AG04449 (cell line): ENCODE measurements at regions of chr2 and their contacts with region 1.

Region 1: DNA sequence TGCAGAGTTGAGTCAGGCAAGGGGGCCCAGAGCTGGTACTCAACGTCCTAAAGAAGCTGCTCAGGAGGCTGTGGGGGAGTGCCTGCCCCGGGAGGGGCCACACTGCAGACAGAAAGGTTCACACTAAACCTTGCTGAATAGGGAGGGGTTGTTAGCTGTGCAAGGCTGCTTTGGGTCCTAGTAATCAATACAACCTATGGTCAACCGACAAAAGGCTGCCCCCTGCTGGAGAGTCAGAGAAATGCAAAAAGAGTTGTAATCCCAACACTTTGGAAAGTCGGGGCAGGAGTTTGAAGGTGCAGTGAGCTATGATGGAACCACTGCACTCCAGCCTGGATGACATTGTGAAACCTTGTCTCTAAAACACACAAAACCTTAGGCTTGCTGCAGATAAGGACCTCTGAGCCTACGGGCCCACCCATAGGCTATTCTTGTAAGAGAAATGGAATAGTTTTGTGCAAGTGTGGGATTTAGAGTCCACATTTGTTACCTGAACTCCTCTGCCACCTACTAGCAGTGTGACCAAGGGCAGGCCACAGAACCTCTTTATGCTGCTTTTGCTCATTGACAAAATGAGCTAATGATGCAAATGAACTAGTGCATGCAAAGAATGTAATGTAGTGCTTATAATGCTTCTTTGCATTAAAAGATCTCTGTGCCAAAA is 81.5 kb downstream of the PRPF40A start:
- DNase-seq: no peak
- H3K4me3 ChIP-seq: no peak overlapping the region
- CTCF ChIP-seq: peak; percentile 61

Region 2: GRCh38 chr2:152036611-152037469 is 598.9 kb before region 1 on chr2:
- CTCF ChIA-PET with region 1: interaction called, 29 read pairs
- POLR2A ChIA-PET with region 1: no interaction called
- DNase-seq: peak; percentile 16
- H3K4me3 ChIP-seq: no peak overlapping the region
- CTCF ChIP-seq: peak; percentile 77

Region 3: GRCh38 chr2:152183401-152184073 is 452.2 kb before region 1 on chr2:
- CTCF ChIA-PET with region 1: interaction called, 169 read pairs
- POLR2A ChIA-PET with region 1: no interaction called
- DNase-seq: no peak
- H3K4me3 ChIP-seq: no peak overlapping the region
- CTCF ChIP-seq: no peak

Region 4: GRCh38 chr2:152200562-152201465 is 435.0 kb before region 1 on chr2:
- CTCF ChIA-PET with region 1: interaction called, 29 read pairs
- POLR2A ChIA-PET with region 1: no interaction called
- DNase-seq: peak; percentile 83
- H3K4me3 ChIP-seq: peak overlapping the region; percentile 53
- CTCF ChIP-seq: no peak

Region 5: DNA sequence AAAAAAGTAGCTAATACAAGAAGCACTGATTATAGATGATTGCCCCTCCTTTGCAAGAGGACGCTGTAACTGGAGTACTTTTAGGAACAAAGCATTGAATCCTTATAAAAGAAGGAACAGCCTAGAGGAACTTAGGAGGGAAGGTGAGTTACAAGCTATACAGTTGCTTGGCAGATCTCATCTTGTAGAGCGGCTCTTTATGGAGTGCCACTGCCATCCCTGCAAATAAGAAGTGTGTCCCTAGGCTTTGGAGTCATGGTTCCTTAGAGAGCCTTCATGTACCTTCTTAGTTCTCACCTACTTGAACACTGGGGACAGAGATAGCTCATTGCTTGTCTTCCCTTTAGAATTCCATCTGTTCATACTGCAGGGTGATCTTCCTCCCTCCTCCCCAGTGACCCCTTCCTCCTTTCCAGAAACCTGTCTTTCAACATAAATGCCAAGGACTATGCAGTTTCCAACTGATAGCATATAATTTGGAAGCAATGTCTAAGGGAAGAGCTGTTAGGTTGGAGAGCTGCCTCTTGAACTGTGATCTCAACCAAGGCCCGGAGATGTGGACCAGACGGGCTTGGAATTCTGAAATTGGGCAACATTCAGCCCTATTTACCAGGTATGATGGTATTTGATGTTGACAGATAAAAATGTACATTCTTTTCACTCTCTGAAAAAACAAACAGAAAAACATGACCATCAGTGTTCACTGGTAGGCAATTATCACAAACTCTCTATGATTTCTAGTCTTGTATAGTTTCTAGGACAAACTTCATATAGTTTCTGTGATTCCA is 293.3 kb before region 1 on chr2:
- CTCF ChIA-PET with region 1: interaction called, 21 read pairs
- POLR2A ChIA-PET with region 1: no interaction called
- DNase-seq: no peak
- H3K4me3 ChIP-seq: no peak overlapping the region
- CTCF ChIP-seq: no peak

Region 6: GRCh38 chr2:152558158-152558984 is 77.4 kb before region 1 on chr2:
- CTCF ChIA-PET with region 1: interaction called, 19 read pairs
- POLR2A ChIA-PET with region 1: no interaction called
- DNase-seq: peak; percentile 70
- H3K4me3 ChIP-seq: no peak overlapping the region
- CTCF ChIP-seq: no peak

Region 7: GRCh38 chr2:152648336-152648735 is 12.6 kb after region 1 on chr2:
- CTCF ChIA-PET with region 1: interaction called, 79 read pairs
- POLR2A ChIA-PET with region 1: no interaction called
- DNase-seq: no peak
- H3K4me3 ChIP-seq: no peak overlapping the region
- CTCF ChIP-seq: no peak

Region 8: DNA sequence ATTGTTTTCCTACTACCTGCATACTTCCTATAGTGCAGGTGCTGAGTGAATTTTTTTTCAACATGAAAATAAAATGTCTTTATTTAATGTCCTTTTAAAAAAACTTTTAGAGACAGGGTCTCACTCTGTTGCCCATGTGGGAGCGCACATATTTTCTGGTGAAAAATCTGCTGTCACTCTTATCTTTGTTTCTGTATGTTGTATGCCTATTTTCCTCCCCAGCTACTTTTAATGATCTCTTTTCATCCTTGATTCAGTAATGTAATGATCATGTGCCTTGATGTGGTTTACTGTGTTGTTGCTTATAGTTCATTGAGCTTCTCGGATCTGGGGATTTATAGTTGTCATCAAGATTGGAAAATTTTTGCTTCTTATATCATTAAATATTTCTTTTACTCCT is 199.9 kb after region 1 on chr2:
- CTCF ChIA-PET with region 1: no interaction called
- POLR2A ChIA-PET with region 1: no interaction called
- DNase-seq: no peak
- H3K4me3 ChIP-seq: no peak overlapping the region
- CTCF ChIP-seq: no peak